GM12878 (cell line): ENCODE measurements at regions of chr12 and their contacts with region 1.

Region 1: DNA sequence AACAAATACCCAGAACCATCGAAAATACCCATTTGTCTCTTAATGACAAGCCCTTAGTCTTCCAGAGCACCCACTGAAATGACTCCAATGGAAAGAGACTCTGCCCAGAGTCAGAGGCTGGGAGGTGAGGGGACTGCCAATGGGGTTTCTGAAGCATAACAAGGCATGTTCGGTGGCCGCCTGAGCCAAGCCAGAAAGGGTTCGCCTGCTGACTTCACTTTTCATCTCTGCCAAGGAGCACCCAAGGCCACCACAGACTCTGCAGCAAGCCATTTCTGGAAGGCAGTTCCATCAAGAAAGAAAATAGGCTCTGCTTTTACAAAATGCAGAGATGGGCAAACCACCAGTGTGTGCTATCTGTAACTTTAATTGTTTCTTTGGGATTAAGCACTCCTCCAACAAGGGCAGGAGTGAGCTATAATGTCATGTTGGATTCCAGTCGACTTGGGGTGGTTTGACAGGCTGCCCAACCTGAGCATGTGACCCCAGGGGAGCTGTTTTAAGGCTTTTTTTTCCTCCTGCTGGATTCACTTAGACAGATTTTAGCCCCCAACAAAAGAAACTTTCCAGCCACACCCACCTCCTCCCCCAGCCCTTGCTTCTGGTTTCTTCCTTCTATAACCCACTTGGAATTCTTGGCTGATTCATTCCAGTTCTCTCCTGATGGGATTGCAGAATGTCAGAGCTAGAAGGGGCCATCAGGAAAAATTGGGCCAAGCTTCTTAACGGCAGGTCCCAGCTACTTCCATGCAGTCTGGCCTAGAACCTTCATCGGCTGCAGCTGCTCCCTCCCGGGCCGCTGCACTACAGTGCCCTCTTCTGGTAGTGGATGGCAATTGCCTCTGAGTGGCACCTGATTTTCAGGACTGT is 24.1 kb downstream of the CKAP4 start:
- DNase-seq: no peak
- ATAC-seq: peak; percentile 94
- H3K4me3 ChIP-seq: no peak overlapping the region
- H3K27ac ChIP-seq: no peak overlapping the region
- H3K4me1 ChIP-seq: no peaks in the 10 kb centered on the region
- H3K27me3 ChIP-seq: no peaks in the 10 kb centered on the region
- CTCF ChIP-seq: peak; percentile 84 to 98 (median 95)
- EP300 ChIP-seq: no peak
- POLR2A ChIP-seq: no peak
- RAD21 ChIP-seq: peak; percentile 59

Region 2: DNA sequence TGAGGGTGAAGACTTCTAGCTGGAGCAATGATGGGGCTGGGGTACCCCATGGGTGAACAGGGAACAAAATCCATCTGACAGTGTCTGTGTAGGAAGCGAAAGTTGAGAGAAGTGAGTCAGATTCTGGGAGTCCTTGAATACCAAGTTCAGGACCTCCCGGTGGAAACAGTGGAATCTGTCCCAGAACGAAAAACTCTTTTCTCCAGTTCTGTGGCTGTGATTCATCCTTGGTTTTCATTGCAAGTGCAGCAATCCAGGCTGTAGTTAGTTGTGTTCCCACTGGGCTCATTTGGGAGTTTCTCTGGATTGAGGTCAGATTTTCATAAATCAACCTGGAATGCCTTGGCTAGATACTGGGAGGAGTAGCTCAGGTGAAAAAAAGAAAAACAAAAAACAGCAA is 772.5 kb before region 1 on chr12:
- CTCF ChIA-PET with region 1: no interaction called
- POLR2A ChIA-PET with region 1: no interaction called
- RAD21 ChIA-PET with region 1: no interaction called
- SMC1A ChIA-PET with region 1: no interaction called
- in situ Hi-C with region 1: no loop called
- intact Hi-C with region 1: no loop called
- DNase-seq: no peak
- ATAC-seq: no peak
- H3K4me3 ChIP-seq: no peak overlapping the region
- H3K27ac ChIP-seq: no peak overlapping the region
- H3K4me1 ChIP-seq: no peaks in the 10 kb centered on the region
- H3K27me3 ChIP-seq: peaks cover 0 to 2% of the 10 kb centered on the region in 2 experiments; a peak in 1 of 4 replicates
- CTCF ChIP-seq: no peak
- EP300 ChIP-seq: no peak
- POLR2A ChIP-seq: no peak
- RAD21 ChIP-seq: no peak

Region 3: GRCh38 chr12:105934274-105934673 is 289.4 kb before region 1 on chr12:
- CTCF ChIA-PET with region 1: no interaction called
- POLR2A ChIA-PET with region 1: no interaction called
- RAD21 ChIA-PET with region 1: no interaction called
- SMC1A ChIA-PET with region 1: no interaction called
- in situ Hi-C with region 1: no loop called
- intact Hi-C with region 1: no loop called
- DNase-seq: no peak
- ATAC-seq: no peak
- H3K4me3 ChIP-seq: no peak overlapping the region
- H3K27ac ChIP-seq: no peak overlapping the region
- H3K4me1 ChIP-seq: no peaks in the 10 kb centered on the region
- H3K27me3 ChIP-seq: no peaks in the 10 kb centered on the region; a peak in 3 of 4 replicates
- CTCF ChIP-seq: no peak
- EP300 ChIP-seq: no peak
- POLR2A ChIP-seq: no peak
- RAD21 ChIP-seq: no peak

Region 4: DNA sequence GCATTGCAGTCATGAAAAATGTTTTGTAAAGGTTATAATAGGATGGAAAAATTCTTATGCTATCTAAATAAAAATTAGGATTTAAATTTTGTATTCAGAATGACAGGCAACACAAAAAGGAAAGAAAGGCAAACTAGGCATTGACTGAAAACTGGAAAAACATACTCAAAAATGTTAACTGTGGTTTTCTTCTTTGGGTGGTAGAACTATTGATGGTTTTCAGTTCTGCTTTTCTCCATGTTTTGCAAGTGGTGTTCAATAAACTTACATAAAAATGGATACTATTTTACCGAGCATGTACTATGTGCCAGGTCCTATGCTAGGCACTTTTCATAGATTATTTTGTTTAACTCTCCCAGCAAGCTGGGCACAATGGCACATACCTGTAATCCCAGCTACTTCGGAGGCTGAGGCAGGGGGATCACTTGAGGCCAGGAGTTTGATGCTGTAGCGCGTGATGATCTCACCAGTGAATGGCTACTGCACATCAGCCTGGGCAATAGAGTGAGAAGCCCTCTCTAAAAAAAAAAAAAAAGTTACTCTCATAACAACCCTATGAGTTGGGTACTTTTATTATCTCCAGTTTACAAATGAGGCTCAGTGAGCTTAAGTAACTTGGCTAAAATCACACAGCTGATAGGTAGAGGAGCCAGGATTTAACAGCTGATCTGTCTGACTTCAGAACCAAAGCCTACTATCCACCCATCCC is 52.5 kb after region 1 on chr12:
- CTCF ChIA-PET with region 1: interaction called, 206 read pairs
- POLR2A ChIA-PET with region 1: no interaction called
- RAD21 ChIA-PET with region 1: interaction called, 7 read pairs
- SMC1A ChIA-PET with region 1: interaction called, 33 read pairs
- in situ Hi-C with region 1: loop called (anchors 5 kb)
- intact Hi-C with region 1: no loop called
- DNase-seq: peak; percentile 65
- ATAC-seq: peak; percentile 92
- H3K4me3 ChIP-seq: peak overlapping the region; percentile 33
- H3K27ac ChIP-seq: no peak overlapping the region
- H3K4me1 ChIP-seq: peaks cover 24% of the 10 kb centered on the region
- H3K27me3 ChIP-seq: no peaks in the 10 kb centered on the region
- CTCF ChIP-seq: no peak
- EP300 ChIP-seq: peak; percentile 29 to 77; a peak in 2 of 4 replicates
- POLR2A ChIP-seq: no peak
- RAD21 ChIP-seq: no peak

Region 5: DNA sequence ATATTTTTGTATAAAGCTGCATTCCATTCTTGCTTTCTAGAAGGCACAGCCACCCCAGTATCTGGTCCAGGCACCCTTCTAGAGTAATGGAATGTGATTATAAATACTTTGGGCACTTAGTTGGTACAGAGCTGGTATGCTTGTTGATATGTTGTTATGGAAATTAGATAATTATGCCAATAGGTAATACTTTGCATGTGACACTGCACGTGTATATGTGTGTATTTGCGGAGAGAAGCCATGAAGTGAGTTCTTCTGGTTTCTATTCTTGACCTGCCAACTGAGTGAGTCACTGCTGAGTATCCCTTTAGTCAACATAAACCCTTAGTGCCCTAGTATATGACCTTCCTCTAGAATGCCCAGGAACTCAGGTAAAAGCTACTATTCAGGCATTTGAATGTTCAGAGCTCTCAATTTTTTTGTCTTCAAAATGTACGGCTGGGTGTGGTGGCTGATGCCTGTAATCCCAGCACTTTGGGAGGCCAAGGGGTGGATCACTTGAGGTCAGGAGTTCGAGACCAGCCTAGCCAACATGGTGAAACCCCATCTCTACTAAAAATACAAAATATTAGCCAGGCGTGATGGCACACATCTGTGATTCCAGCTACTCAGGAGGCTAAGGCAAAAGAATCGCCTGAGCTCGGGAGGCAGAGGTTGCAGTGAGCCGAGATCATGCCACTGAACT is 72.6 kb after region 1 on chr12:
- CTCF ChIA-PET with region 1: interaction called, 7 read pairs
- POLR2A ChIA-PET with region 1: no interaction called
- RAD21 ChIA-PET with region 1: no interaction called
- SMC1A ChIA-PET with region 1: interaction called, 13 read pairs
- in situ Hi-C with region 1: no loop called
- intact Hi-C with region 1: no loop called
- DNase-seq: no peak
- ATAC-seq: no peak
- H3K4me3 ChIP-seq: no peak overlapping the region
- H3K27ac ChIP-seq: no peak overlapping the region
- H3K4me1 ChIP-seq: peaks cover under 1% of the 10 kb centered on the region; the same call in 1 of the 2 replicates
- H3K27me3 ChIP-seq: no peaks in the 10 kb centered on the region
- CTCF ChIP-seq: no peak
- EP300 ChIP-seq: no peak
- POLR2A ChIP-seq: no peak
- RAD21 ChIP-seq: no peak